GM12878 (cell line): ENCODE measurements at regions of chr9 and their contacts with region 1.

Region 1: DNA sequence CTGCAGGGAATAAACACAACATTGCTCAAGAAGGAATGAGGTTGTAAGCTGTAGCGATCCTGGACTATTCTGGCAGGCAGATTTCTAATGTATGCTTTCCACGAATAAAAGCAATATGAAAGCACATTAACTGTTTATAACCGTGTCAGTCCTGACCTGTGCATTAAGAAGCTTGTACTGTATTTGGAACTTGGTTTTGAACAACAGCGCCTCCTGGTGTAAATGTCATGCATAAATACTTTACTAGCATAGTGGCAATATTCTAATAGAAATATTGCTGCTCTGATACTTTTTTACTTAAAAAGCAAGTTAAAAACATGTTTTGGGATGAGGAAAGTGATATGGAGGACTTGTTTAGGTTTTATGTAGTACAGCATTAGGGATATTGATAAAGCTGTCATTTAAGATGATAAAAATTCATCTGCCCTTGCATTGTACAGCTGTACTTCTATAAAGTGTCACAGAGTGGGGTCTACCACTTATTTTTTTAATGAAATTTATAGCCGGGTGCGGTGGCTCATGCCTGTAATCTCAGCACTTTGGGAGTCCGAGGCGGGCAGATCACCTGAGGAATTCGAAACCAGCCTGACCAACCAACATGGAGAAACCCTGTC is 70.7 kb upstream of the GNE start:
- DNase-seq: no peak
- ATAC-seq: peak; percentile 85
- H3K4me3 ChIP-seq: no peak overlapping the region
- H3K27ac ChIP-seq: no peak overlapping the region
- H3K4me1 ChIP-seq: no peaks in the 10 kb centered on the region
- H3K27me3 ChIP-seq: no peaks in the 10 kb centered on the region
- CTCF ChIP-seq: peak; percentile 64 to 79 (median 75)
- EP300 ChIP-seq: no peak
- POLR2A ChIP-seq: no peak
- RAD21 ChIP-seq: peak; percentile 77

Region 2: GRCh38 chr9:36102742-36103495 is 226.0 kb before region 1 on chr9:
- CTCF ChIA-PET with region 1: interaction called, 23 read pairs
- POLR2A ChIA-PET with region 1: interaction called, 6 read pairs
- RAD21 ChIA-PET with region 1: interaction called, 4 read pairs
- SMC1A ChIA-PET with region 1: interaction called, 17 read pairs
- in situ Hi-C with region 1: no loop called
- intact Hi-C with region 1: loop called (anchors 5 kb)
- DNase-seq: peak; percentile 36
- ATAC-seq: peak; percentile 100
- H3K4me3 ChIP-seq: no peak overlapping the region
- H3K27ac ChIP-seq: no peak overlapping the region
- H3K4me1 ChIP-seq: no peaks in the 10 kb centered on the region
- H3K27me3 ChIP-seq: no peaks in the 10 kb centered on the region; a peak in 1 of 4 replicates
- CTCF ChIP-seq: peak; percentile 89 to 92 (median 92)
- EP300 ChIP-seq: no peak
- POLR2A ChIP-seq: no peak
- RAD21 ChIP-seq: peak; percentile 92

Region 3: DNA sequence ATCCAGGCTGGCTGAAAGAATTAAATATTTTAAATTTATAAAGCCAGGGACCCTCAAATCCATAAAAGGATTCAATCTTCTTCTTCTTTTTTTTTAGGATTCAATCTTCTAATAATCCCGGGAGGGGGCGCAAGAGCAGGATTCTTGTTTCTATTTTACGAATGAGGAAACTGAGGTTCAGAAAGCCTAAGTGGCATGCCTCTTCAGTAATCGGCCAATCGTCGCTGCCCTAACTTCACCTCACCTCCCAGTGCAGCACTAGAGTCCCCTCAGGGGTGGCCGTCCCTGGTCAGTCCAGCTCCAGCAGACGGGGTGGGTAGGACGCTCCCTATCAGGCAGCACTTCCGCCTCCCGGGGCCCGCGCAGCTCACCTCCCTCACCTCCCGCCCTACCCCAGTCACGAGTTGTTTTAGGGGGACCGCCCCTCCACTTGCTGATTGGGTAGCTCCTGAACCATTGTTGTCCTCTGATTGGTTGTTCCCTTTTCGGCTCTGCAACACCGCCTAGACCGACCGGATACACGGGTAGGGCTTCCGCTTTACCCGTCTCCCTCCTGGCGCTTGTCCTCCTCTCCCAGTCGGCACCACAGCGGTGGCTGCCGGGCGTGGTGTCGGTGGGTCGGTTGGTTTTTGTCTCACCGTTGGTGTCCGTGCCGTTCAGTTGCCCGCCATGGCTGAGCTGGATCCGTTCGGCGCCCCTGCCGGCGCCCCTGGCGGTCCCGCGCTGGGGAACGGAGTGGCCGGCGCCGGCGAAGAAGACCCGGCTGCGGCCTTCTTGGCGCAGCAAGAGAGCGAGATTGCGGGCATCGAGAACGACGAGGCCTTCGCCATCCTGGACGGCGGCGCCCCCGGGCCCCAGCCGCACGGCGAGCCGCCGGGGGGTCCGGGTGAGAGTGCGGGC is 138.3 kb before region 1 on chr9 and contains the start of gene CLTA:
- CTCF ChIA-PET with region 1: interaction called, 40 read pairs
- POLR2A ChIA-PET with region 1: no interaction called
- RAD21 ChIA-PET with region 1: interaction called, 21 read pairs
- SMC1A ChIA-PET with region 1: interaction called, 17 read pairs
- in situ Hi-C with region 1: no loop called
- intact Hi-C with region 1: loop called (anchors 5 kb)
- DNase-seq: peak; percentile 97
- ATAC-seq: peak; percentile 98
- H3K4me3 ChIP-seq: peak within 1 kb of the TSS; percentile 86
- H3K27ac ChIP-seq: peak within 1 kb of the TSS; percentile 88
- H3K4me1 ChIP-seq: peaks cover 13% of the 10 kb centered on the region
- H3K27me3 ChIP-seq: no peaks in the 10 kb centered on the region
- CTCF ChIP-seq: peak; percentile 43 to 49 (median 46); a peak in 5 of 6 replicates
- EP300 ChIP-seq: peak in 1 of 2 experiments; percentile 49; a peak in 2 of 4 replicates
- POLR2A ChIP-seq: peak; percentile 100
- RAD21 ChIP-seq: 0 out of 2 replicates have a peak, but pooled peaks have one; percentile 13
- polyA plus RNA-seq, gene CLTA: 49.0 to 103 TPM

Region 4: DNA sequence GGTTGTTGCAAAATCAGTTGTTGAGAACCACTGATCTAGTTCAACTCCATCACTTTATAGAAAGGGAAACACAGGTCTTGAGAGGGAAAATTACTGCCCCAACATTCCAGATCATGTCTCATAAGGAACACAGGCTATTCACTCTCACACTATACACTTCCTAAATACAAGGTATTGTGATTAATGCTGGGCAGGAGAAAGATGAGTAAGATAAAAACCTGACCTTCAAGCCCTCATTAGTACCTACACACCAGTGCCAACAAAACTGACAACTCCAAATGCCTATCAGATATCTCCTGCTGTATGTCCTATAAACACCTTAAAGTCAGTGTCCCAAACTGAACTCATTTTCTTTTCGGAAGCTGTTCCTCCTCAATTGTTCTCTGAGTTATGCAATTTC is 78.8 kb before region 1 on chr9:
- CTCF ChIA-PET with region 1: interaction called, 60 read pairs
- POLR2A ChIA-PET with region 1: no interaction called
- RAD21 ChIA-PET with region 1: interaction called, 27 read pairs
- SMC1A ChIA-PET with region 1: interaction called, 32 read pairs
- in situ Hi-C with region 1: no loop called
- intact Hi-C with region 1: loop called (anchors 1 kb)
- DNase-seq: no peak
- ATAC-seq: peak; percentile 56
- H3K4me3 ChIP-seq: no peak overlapping the region
- H3K27ac ChIP-seq: no peak overlapping the region
- H3K4me1 ChIP-seq: peaks cover 22% of the 10 kb centered on the region
- H3K27me3 ChIP-seq: no peaks in the 10 kb centered on the region
- CTCF ChIP-seq: no peak
- EP300 ChIP-seq: no peak
- POLR2A ChIP-seq: no peak
- RAD21 ChIP-seq: no peak

Region 5: DNA sequence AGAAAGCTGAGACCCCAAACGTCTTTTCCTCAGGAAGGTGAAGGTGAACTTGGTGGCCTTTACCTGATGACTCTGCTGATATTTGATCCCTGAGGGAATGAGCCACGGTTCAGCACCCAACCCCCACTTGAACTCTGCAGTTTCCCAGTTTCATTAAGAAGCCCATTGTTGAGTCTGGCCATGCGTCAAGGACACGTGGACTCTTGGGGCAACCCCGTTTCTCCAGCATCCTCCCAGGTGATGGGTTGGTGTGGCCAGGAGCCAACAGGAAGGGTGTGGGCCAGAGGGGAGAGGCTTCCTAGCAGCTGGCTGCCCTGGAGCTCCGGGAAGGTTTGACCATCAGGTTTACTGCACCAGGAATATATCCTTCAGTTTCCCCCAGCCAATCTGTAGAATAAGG is 11.1 kb before region 1 on chr9:
- CTCF ChIA-PET with region 1: interaction called, 22 read pairs
- POLR2A ChIA-PET with region 1: no interaction called
- RAD21 ChIA-PET with region 1: interaction called, 3 read pairs
- SMC1A ChIA-PET with region 1: interaction called, 6 read pairs
- in situ Hi-C with region 1: no loop called
- intact Hi-C with region 1: no loop called
- DNase-seq: no peak
- ATAC-seq: no peak
- H3K4me3 ChIP-seq: no peak overlapping the region
- H3K27ac ChIP-seq: no peak overlapping the region
- H3K4me1 ChIP-seq: no peaks in the 10 kb centered on the region
- H3K27me3 ChIP-seq: no peaks in the 10 kb centered on the region
- CTCF ChIP-seq: no peak
- EP300 ChIP-seq: no peak
- POLR2A ChIP-seq: no peak
- RAD21 ChIP-seq: no peak

Region 6: DNA sequence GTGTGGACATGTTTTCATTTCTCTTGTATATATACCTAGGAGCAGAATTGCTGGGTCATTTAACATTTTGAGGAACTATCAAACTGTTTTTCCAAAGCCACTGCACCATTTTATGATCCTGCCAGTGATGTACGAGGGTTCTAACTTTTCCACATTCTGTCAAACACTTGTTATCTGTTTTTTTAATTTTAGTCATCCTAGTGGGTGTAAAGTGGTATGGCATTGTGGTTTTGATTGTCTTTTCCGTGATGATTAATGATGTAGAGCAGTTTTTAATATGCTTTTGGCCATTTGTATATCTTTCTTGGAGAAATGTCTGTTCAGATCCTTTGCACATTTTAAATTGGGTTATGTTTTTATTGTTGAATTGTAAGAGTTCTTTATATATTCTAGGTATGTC is 350.8 kb after region 1 on chr9:
- CTCF ChIA-PET with region 1: no interaction called
- POLR2A ChIA-PET with region 1: no interaction called
- RAD21 ChIA-PET with region 1: no interaction called
- SMC1A ChIA-PET with region 1: no interaction called
- in situ Hi-C with region 1: no loop called
- intact Hi-C with region 1: no loop called
- DNase-seq: no peak
- ATAC-seq: no peak
- H3K4me3 ChIP-seq: no peak overlapping the region
- H3K27ac ChIP-seq: no peak overlapping the region
- H3K4me1 ChIP-seq: no peaks in the 10 kb centered on the region
- H3K27me3 ChIP-seq: no peaks in the 10 kb centered on the region
- CTCF ChIP-seq: no peak
- EP300 ChIP-seq: no peak
- POLR2A ChIP-seq: no peak
- RAD21 ChIP-seq: no peak

Region 7: DNA sequence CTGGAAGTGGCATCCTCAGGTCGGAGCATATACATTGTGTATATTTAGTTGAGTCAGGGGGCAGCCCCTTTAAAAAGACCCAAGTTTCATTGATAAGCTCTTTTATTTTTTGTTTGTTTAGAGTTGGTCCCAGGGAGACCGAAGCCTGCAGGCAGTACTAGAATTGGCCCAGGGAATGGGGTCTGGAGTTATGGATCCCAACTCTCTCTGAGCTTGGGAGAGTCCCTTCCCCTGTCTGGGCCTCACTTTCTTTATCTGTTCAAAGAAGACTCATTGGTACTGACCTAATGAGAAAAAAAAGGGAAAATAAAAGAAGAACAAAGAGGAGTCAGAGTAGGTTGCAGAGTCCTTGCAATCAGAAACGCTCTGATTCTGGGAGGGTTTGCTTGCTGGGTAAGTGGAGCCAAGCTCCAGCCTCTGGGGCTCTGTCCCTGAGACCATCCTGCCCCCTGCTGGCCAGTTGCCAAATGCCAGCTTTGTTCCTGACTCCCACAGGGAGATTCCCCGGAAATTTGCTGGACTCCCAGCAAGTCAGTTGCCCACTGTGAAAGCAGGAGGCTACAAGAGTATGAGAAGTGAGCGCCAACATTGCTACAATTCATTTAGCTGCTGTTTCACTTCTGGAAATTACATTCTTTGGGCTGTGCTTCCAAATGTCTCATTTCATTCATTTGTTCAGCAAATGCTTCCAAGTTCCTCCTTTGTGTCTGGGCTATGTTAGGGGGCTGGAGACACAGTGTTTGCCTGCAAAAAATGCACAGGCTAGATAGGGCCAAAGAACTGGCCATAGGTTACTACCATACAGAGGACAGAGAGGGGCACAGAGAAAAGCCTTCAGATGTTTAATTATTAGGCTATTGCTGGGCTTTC is 400.0 kb after region 1 on chr9:
- CTCF ChIA-PET with region 1: interaction called, 3 read pairs
- POLR2A ChIA-PET with region 1: no interaction called
- RAD21 ChIA-PET with region 1: interaction called, 4 read pairs
- SMC1A ChIA-PET with region 1: interaction called, 4 read pairs
- in situ Hi-C with region 1: no loop called
- intact Hi-C with region 1: loop called (anchors 10 kb)
- DNase-seq: peak; percentile 13
- ATAC-seq: peak; percentile 86
- H3K4me3 ChIP-seq: no peak overlapping the region
- H3K27ac ChIP-seq: no peak overlapping the region
- H3K4me1 ChIP-seq: peaks cover 6% of the 10 kb centered on the region
- H3K27me3 ChIP-seq: no peaks in the 10 kb centered on the region
- CTCF ChIP-seq: peak; percentile 85 to 95 (median 94); a peak in 5 of 6 replicates
- EP300 ChIP-seq: no peak
- POLR2A ChIP-seq: no peak
- RAD21 ChIP-seq: peak; percentile 92